MCF 10A (cell line): ENCODE measurements at regions of chr9 and their contacts with region 1.

Region 1: DNA sequence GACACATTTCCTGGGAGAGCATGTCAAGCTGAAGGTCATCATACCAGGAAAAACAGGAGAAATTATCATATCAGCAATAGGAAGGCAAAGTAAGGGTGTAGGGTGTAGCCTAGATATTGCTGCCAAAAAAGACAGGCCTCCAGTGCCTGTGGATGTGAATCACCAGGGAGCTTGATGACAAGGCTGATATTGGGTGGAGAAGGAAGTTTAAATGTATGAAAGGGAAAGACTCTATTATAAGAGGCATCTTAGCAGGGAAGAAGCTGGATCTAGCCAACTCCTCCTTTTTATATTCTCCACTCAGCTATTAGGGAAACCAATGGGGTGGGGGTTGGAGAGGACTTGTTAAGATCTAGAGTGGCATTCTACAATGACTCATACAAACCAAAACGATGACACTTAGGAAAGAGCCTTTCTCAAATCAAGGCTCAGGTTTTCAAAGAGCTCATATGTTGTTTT is 13.4 kb upstream of the TXNDC8 start:
- DNase-seq: peak; percentile 76
- H3K4me3 Mint-ChIP-seq: no peak overlapping the region
- H3K27ac Mint-ChIP-seq: peak overlapping the region; percentile 67
- H3K4me1 Mint-ChIP-seq: peaks cover 14% of the 10 kb centered on the region
- H3K27me3 Mint-ChIP-seq: no peaks in the 10 kb centered on the region
- CTCF ChIP-seq: no peak

Region 2: DNA sequence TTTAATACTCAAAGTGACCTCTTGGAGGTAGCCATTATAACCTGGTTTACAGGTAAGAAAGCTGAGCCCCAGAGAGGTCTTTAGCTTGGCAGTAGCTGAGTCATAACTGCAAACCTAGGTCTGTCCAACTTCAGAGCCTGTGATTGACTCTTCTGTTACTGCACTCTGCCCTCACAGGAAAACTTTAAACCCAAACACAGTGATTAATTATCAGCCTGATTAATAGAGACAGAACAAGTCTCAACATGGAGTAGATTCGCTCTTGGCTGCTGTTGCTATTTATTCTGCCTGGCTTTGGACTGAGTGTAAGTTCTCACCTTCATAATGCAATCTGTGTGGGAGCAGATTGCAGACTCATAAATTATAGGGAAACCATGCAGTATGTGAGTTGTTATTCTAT is 67.3 kb before region 1 on chr9:
- CTCF ChIA-PET with region 1: interaction called, 3 read pairs
- POLR2A ChIA-PET with region 1: interaction called, 12 read pairs
- intact Hi-C with region 1: no loop called
- DNase-seq: peak; percentile 86
- H3K4me3 Mint-ChIP-seq: peak overlapping the region; percentile 28
- H3K27ac Mint-ChIP-seq: peak overlapping the region; percentile 63
- H3K4me1 Mint-ChIP-seq: peaks cover 18% of the 10 kb centered on the region
- H3K27me3 Mint-ChIP-seq: no peaks in the 10 kb centered on the region
- CTCF ChIP-seq: no peak

Region 3: GRCh38 chr9:110370316-110370715 is 19.3 kb after region 1 on chr9:
- CTCF ChIA-PET with region 1: no interaction called
- POLR2A ChIA-PET with region 1: interaction called, 15 read pairs
- intact Hi-C with region 1: no loop called
- DNase-seq: peak; percentile 31
- H3K4me3 Mint-ChIP-seq: no peak overlapping the region
- H3K27ac Mint-ChIP-seq: no peak overlapping the region
- H3K4me1 Mint-ChIP-seq: no peaks in the 10 kb centered on the region
- H3K27me3 Mint-ChIP-seq: no peaks in the 10 kb centered on the region
- CTCF ChIP-seq: no peak

Region 4: GRCh38 chr9:110414471-110414870 is 63.4 kb after region 1 on chr9:
- CTCF ChIA-PET with region 1: no interaction called
- POLR2A ChIA-PET with region 1: no interaction called
- intact Hi-C with region 1: no loop called
- DNase-seq: no peak
- H3K4me3 Mint-ChIP-seq: no peak overlapping the region
- H3K27ac Mint-ChIP-seq: no peak overlapping the region
- H3K4me1 Mint-ChIP-seq: no peaks in the 10 kb centered on the region
- H3K27me3 Mint-ChIP-seq: no peaks in the 10 kb centered on the region
- CTCF ChIP-seq: no peak

Region 5: DNA sequence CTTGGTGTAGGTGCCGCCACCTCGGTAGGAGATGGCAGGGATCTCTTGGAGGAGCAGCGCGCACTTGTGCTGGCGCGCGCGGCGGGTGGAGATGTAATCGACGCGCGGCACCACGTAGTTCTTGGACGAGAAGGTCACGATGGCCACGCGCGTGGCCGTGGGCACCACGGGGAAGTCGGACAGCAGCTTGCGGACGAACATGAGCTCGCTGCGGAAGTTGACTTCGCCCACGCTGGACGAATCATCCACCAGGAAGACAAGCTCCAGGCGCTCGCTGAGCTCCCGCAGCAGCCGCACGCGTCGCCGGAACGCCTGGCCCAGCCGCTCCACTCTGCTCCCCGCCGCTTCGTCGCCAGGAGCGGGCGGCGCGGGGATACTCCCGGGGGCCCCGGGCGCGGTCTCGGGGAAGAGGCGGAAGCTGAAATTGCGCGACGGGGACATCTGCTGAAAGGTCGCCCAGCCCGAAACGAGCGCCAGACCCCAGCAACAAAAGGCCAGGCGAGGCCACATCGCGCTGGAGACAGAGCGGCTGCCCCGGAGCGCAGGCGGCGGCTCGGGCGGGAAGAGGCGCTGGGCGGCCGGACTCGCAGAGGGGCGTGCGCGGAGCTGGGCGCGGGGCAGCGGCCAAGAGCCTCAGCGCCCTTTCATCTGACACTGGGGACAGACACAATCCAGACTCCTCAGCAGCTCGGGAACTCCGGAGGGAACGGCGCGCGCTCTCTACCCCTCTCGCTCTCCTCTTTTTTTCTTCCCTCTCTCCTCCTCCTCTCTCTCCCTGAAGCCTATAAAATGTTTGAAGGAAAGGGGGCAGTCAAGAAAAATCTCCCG is 228.2 kb after region 1 on chr9 and contains the start of gene SVEP1:
- CTCF ChIA-PET with region 1: no interaction called
- POLR2A ChIA-PET with region 1: interaction called, 3 read pairs
- intact Hi-C with region 1: loop called (anchors 5 kb)
- DNase-seq: peak; percentile 67
- H3K4me3 Mint-ChIP-seq: peak within 1 kb of the TSS; percentile 98
- H3K27ac Mint-ChIP-seq: peak within 1 kb of the TSS; percentile 37
- H3K4me1 Mint-ChIP-seq: peaks cover 43% of the 10 kb centered on the region
- H3K27me3 Mint-ChIP-seq: no peaks in the 10 kb centered on the region
- CTCF ChIP-seq: no peak
- total RNA-seq, gene SVEP1: 9.9 and 21.9 TPM in 2 replicates